ENCODE measurements at regions of chr1 and their contacts with region 1.

Region 1: DNA sequence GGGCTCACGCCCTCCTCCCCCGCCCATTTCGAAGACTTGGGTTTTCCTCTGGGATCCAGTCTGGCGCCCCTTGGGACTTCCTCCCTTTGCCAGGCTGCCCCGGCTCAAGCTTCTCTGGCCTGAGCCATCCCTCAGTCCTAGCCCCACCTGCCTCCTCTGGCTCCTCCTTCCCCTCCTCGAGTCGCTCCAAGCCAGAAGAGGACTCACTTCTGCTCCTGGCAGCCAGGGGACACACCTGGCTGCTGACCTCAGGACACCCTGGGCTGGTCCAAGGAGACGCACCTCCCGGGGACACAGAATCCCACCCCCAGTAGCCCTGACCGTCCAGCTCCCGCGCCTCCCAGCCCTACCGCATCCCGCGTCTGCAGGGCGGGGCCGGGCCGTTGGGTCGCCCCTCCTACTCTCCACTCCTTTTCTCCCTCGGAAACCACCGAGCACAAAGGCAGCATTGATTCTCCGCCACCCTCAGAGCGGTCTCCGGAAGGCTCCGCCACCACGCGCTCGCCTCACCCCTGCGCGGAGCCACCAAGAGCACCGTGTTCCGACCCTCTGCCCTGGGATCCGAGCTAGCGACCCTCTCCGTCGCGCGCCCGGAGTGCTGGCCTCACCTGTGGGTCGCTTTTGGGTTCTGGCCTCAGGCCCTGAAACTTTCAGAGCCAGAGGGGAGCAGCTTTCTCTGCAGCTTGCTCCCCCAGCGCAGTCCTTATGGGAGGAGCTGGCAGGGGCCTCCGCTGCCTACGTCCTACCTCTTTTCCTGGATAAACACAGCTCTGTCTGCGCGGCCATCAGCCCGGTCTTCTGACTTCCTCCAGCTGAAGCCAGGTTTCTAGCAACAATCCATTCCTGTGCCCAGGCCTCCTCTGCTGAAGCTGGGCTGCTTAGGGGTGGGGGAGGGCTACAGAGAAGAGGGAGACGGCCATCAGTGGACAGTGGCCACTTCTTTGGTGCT is at the start of gene C2CD4D:
- DNase-seq: no peak
- H3K4me3 ChIP-seq: peak within 1 kb of the TSS in 1 of 3 experiments; percentile 36
- H3K27ac ChIP-seq: no peak within 1 kb of the TSS
- H3K4me1 ChIP-seq: peaks cover 12% of the 10 kb centered on the region
- H3K27me3 ChIP-seq: peaks cover 7 to 12% of the 10 kb centered on the region in 2 experiments
- CTCF ChIP-seq: no peak
- POLR2A ChIP-seq: no peak
- total RNA-seq, gene C2CD4D: 0.18 TPM in 1 of 2 replicates, not detected in the other

Region 2: DNA sequence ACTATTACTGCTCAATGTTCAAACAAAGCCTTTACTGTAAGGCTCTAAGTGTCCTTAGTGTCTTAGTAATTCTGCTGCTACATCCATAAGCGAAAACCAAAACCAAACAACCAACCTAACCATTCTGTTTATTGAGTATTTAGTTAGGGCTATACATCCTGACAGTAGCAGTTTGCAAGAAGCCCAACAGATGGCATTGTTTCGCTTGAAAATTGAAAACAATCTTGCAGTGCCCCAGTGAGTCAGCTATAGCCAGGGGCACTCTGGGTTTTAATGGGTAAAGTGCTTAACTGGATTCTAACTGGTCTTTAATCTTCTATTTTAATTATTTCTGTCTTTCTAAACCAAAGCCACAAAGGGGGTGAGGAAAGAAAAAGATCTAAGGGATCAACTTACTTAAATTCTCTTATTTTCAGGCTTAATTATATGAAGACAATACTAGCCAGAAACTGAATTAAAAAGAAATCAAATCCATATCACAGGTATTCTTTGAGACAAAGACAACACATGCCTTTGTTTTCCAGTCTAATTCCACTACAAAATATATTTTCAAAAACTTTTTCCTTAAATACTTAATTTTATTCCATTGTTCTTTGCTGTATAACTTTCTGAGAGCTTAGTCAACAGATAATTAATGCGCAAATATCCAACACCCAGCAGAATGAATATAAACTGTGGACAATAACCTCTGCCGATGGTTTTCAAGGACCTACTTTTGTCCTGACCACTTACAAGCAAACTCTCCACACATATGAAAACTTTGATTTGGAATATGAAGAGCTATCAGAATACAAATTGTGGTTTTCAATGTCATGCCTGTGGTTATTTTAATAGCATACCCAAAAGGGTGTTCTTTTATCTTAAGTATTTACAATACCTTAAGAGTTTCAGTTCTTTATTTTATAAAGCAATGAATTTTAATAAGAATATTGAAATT is 395.6 kb before region 1 on chr1:
- CTCF ChIA-PET with region 1: interaction called, 17 read pairs
- POLR2A ChIA-PET with region 1: no interaction called
- dilution Hi-C with region 1: no loop called
- intact Hi-C with region 1: loop called (anchors 1 kb)
- DNase-seq: peak; percentile 84
- H3K4me3 ChIP-seq: no peak overlapping the region
- H3K27ac ChIP-seq: no peak overlapping the region
- H3K4me1 ChIP-seq: peaks cover 5% of the 10 kb centered on the region
- H3K27me3 ChIP-seq: no peaks in the 10 kb centered on the region
- CTCF ChIP-seq: peak; percentile 69 to 70
- POLR2A ChIP-seq: no peak

Region 3: GRCh38 chr1:151594143-151594625 is 245.5 kb before region 1 on chr1:
- CTCF ChIA-PET with region 1: interaction called, 8 read pairs
- POLR2A ChIA-PET with region 1: no interaction called
- dilution Hi-C with region 1: no loop called
- intact Hi-C with region 1: loop called (anchors 1 kb)
- DNase-seq: peak; percentile 51
- H3K4me3 ChIP-seq: no peak overlapping the region
- H3K27ac ChIP-seq: no peak overlapping the region
- H3K4me1 ChIP-seq: no peaks in the 10 kb centered on the region
- H3K27me3 ChIP-seq: no peaks in the 10 kb centered on the region
- CTCF ChIP-seq: peak; percentile 94 to 95
- POLR2A ChIP-seq: no peak

Region 4: DNA sequence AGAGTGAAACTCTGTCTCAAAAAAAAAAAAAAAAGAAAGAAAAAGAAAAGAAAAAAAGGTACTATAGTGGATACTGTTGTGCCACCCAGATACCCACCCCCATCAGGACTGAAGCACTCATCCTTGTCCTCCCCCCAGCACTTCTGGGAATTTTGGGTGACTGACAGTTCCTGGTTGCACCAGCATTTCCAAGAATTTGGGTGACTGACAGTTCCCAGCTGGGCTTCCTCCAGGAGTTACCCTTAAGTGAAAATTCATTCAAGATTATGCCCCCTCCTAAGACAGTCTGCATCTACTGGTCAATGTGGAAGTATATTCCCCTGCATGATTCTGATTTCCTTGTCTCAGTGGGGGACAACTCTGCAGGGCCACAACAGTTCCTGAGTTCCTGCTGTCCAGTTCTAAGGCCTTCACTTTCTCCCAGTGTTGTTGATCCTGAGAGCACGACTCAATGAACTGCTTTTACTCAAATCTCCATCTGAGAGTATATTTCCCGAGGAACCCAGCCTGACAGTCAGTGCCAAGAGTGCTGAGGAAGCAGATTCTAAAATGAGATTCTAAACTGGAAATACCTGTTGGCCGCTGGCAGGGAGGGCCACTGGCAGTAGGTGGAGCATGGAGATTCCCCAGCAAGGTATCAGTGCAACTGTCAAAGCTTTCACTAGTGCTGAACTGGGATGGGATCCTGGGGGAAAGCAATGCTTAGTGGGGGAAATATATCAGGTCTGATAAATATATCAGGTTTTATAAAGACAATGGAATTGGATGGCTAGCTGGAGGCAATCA is 99.9 kb before region 1 on chr1:
- CTCF ChIA-PET with region 1: interaction called, 15 read pairs
- POLR2A ChIA-PET with region 1: no interaction called
- dilution Hi-C with region 1: no loop called
- intact Hi-C with region 1: loop called (anchors 1 kb)
- DNase-seq: no peak
- H3K4me3 ChIP-seq: no peak overlapping the region
- H3K27ac ChIP-seq: no peak overlapping the region
- H3K4me1 ChIP-seq: no peaks in the 10 kb centered on the region
- H3K27me3 ChIP-seq: peaks cover 18 to 29% of the 10 kb centered on the region in 2 experiments
- CTCF ChIP-seq: no peak
- POLR2A ChIP-seq: no peak

Region 5: DNA sequence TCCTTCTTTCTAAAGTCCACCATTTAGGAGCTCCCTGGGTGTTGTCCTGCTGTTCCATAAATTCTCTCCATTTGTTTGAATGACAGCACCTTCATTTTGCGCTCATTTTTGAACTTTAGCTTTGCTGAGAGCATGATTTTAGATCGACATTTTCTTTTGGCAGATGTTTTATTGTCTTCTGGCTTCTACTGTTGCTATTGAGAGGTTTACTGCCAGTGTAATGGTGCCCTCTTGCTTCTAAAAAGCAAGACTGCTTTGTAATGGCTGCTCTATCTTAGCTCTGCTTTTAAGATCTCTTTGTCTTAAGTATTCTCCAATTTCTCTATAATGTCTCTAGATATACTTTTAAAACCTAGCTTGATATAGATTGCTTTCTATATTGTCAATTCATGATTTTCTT is 41.7 kb after region 1 on chr1:
- CTCF ChIA-PET with region 1: interaction called, 10 read pairs
- POLR2A ChIA-PET with region 1: no interaction called
- dilution Hi-C with region 1: no loop called
- intact Hi-C with region 1: no loop called
- DNase-seq: peak; percentile 35
- H3K4me3 ChIP-seq: no peak overlapping the region
- H3K27ac ChIP-seq: no peak overlapping the region
- H3K4me1 ChIP-seq: peaks cover 1% of the 10 kb centered on the region
- H3K27me3 ChIP-seq: no peaks in the 10 kb centered on the region
- CTCF ChIP-seq: no peak
- POLR2A ChIP-seq: no peak

Region 6: DNA sequence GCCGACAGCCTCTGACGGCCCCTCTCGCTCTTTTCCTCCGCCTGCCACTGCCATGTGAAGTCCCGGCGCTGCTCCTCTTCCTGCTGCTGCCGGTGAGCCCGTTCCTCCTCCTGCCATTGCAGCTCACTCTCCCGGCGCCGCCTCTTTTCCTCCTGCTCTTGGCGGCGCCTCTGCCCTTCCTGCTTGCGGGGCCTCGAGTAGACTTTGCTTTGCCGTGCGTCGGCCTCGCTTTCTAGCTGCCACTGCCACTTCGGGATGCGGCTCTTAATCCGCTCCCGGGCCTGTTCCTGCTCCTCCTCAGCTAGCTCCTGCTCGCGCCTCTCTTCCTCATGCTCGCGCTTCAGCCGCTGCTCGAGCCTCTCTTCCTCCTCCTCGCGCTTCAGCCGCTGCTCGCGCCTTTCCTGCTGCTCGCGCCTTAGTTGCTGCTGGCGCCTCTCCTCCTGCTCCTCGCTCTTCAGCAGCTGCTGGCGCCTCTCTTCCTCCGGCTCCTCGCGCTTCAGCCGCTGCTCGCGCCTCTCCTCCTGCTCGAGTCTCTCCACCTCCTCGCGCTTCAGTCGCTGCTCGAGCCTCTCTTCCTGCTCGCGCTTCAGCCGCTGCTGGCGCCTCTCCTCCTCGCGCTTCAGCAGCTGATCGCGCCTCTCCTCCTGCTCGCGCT is 271.3 kb after region 1 on chr1:
- CTCF ChIA-PET with region 1: no interaction called
- POLR2A ChIA-PET with region 1: no interaction called
- dilution Hi-C with region 1: no loop called
- intact Hi-C with region 1: no loop called
- DNase-seq: peak; percentile 58
- H3K4me3 ChIP-seq: peak overlapping the region; percentile 19 to 35 (median 33)
- H3K27ac ChIP-seq: no peak overlapping the region
- H3K4me1 ChIP-seq: peaks cover 33% of the 10 kb centered on the region
- H3K27me3 ChIP-seq: peaks cover 75 to 93% of the 10 kb centered on the region in 2 experiments
- CTCF ChIP-seq: no peak
- POLR2A ChIP-seq: no peak

Measured in endothelial cell of umbilical vein (primary cell).